IMR-90 (cell line): ENCODE measurements at regions of chr15 and their contacts with region 1.

Region 1: GRCh38 chr15:34987985-34988873 is at the start of gene ZNF770:
- DNase-seq: peak; percentile 75
- ATAC-seq: peak; percentile 96
- H3K4me3 ChIP-seq: peak within 1 kb of the TSS; percentile 82
- H3K27ac ChIP-seq: peak within 1 kb of the TSS; percentile 97
- H3K4me1 ChIP-seq: peaks cover 5% of the 10 kb centered on the region
- H3K27me3 ChIP-seq: no peaks in the 10 kb centered on the region
- CTCF ChIP-seq: no peak
- POLR2A ChIP-seq: peak; percentile 88
- RAD21 ChIP-seq: no peak
- total RNA-seq, gene ZNF770: 26.5 and 38.9 TPM in 2 replicates

Region 2: DNA sequence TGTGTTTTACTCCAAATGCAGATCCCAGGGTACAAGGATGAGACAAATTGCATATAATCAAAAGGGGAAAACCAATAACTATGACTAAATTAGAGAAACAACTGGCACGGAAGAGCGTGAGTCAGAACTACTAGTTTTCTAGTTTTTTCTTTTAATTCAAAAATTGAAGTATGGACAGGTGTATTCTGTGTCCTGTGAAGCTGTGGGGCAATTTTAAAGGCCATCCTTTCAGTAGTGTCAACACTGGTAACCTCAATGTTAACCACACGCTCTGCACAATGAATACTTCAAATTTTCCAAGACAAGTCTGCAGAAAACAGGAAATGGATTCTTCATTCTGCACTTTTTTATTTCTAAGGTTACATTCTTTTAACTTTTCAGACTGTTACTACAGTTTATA is 518.1 kb before region 1 on chr15:
- CTCF ChIA-PET with region 1: no interaction called
- POLR2A ChIA-PET with region 1: no interaction called
- dilution Hi-C with region 1: no loop called
- in situ Hi-C with region 1: no loop called
- intact Hi-C with region 1: no loop called
- DNase-seq: no peak
- ATAC-seq: no peak
- H3K4me3 ChIP-seq: no peak overlapping the region
- H3K27ac ChIP-seq: no peak overlapping the region
- H3K4me1 ChIP-seq: no peaks in the 10 kb centered on the region
- H3K27me3 ChIP-seq: no peaks in the 10 kb centered on the region
- CTCF ChIP-seq: no peak
- POLR2A ChIP-seq: no peak
- RAD21 ChIP-seq: no peak

Region 3: GRCh38 chr15:35000511-35000910 is 12.3 kb after region 1 on chr15:
- CTCF ChIA-PET with region 1: no interaction called
- POLR2A ChIA-PET with region 1: interaction called, 11 read pairs
- dilution Hi-C with region 1: no loop called
- in situ Hi-C with region 1: no loop called
- intact Hi-C with region 1: no loop called
- DNase-seq: peak; percentile 79
- ATAC-seq: peak; percentile 79
- H3K4me3 ChIP-seq: no peak overlapping the region
- H3K27ac ChIP-seq: no peak overlapping the region
- H3K4me1 ChIP-seq: peaks cover 2% of the 10 kb centered on the region; the same call in 1 of the 2 replicates
- H3K27me3 ChIP-seq: no peaks in the 10 kb centered on the region; the same call in 1 of the 2 replicates
- CTCF ChIP-seq: no peak
- POLR2A ChIP-seq: no peak
- RAD21 ChIP-seq: no peak

Region 4: DNA sequence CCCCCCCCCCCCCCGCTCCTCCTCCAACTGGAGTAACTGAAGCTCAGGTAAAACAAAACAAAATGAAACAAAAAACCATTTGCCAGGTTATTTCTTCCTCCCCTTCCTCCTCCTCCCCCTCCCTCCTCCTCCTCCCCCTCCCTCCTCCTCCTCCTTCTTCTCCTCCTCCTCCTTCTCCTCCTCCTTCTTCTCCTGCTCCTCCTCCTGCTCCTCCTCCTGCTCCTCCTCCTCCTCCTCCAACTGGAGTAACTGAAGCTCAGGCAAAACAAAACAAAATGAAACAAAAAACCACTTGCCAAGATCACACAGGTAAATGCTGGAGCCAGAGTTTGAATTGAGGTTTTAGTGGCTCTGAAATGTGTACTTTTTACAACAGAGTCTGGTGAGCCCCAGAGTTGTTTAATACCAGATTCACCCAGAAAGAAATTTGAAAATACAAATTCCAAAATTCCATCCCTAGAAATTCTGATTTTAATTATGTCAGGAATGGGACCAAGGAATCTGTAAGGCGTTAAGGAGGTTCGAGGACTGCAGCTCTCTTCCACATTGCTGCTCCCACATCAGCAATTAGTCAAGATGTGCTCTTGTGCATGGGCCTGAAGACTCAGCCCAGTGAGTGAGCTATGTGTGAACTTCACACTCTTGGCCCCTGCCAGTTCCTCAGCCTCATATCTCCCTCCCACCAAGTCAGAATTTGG is 31.3 kb after region 1 on chr15:
- CTCF ChIA-PET with region 1: interaction called, 4 read pairs
- POLR2A ChIA-PET with region 1: interaction called, 12 read pairs
- dilution Hi-C with region 1: no loop called
- in situ Hi-C with region 1: no loop called
- intact Hi-C with region 1: no loop called
- DNase-seq: peak; percentile 10
- ATAC-seq: peak; percentile 75
- H3K4me3 ChIP-seq: no peak overlapping the region
- H3K27ac ChIP-seq: no peak overlapping the region
- H3K4me1 ChIP-seq: no peaks in the 10 kb centered on the region
- H3K27me3 ChIP-seq: no peaks in the 10 kb centered on the region; the same call in 1 of the 2 replicates
- CTCF ChIP-seq: no peak
- POLR2A ChIP-seq: no peak
- RAD21 ChIP-seq: no peak

Region 5: GRCh38 chr15:35067496-35068347 is 79.5 kb after region 1 on chr15:
- CTCF ChIA-PET with region 1: no interaction called
- POLR2A ChIA-PET with region 1: no interaction called
- dilution Hi-C with region 1: no loop called
- in situ Hi-C with region 1: no loop called
- intact Hi-C with region 1: loop called (anchors 5 kb)
- DNase-seq: no peak
- ATAC-seq: peak; percentile 57
- H3K4me3 ChIP-seq: no peak overlapping the region
- H3K27ac ChIP-seq: no peak overlapping the region; the same call in 1 of the 2 replicates
- H3K4me1 ChIP-seq: peaks cover 2% of the 10 kb centered on the region; the same call in 1 of the 2 replicates
- H3K27me3 ChIP-seq: no peaks in the 10 kb centered on the region
- CTCF ChIP-seq: no peak
- POLR2A ChIP-seq: no peak
- RAD21 ChIP-seq: no peak